ENCODE measurements at regions of chr10 and their contacts with region 1.

Region 1: GRCh38 chr10:22436884-22437619 is 91.8 kb downstream of the SPAG6 start:
- DNase-seq: peak; percentile 88
- ATAC-seq: peak; percentile 88
- H3K4me3 Mint-ChIP-seq: peak overlapping the region; percentile 94
- H3K27ac Mint-ChIP-seq: peak overlapping the region; percentile 96
- H3K4me1 Mint-ChIP-seq: peaks cover 36% of the 10 kb centered on the region
- H3K27me3 Mint-ChIP-seq: no peaks in the 10 kb centered on the region
- CTCF ChIP-seq: no peak

Region 2: GRCh38 chr10:22097696-22098095 is 339.4 kb before region 1 on chr10:
- CTCF ChIA-PET with region 1: no interaction called
- POLR2A ChIA-PET with region 1: no interaction called
- intact Hi-C with region 1: no loop called
- DNase-seq: no peak
- ATAC-seq: no peak
- H3K4me3 Mint-ChIP-seq: no peak overlapping the region
- H3K27ac Mint-ChIP-seq: no peak overlapping the region
- H3K4me1 Mint-ChIP-seq: no peaks in the 10 kb centered on the region
- H3K27me3 Mint-ChIP-seq: peaks cover 2% of the 10 kb centered on the region
- CTCF ChIP-seq: no peak

Region 3: GRCh38 chr10:22228943-22229801 is 207.9 kb before region 1 on chr10:
- CTCF ChIA-PET with region 1: interaction called, 3 read pairs
- POLR2A ChIA-PET with region 1: interaction called, 41 read pairs
- intact Hi-C with region 1: loop called (anchors 1 kb)
- DNase-seq: peak; percentile 81
- ATAC-seq: peak; percentile 79
- H3K4me3 Mint-ChIP-seq: peak overlapping the region; percentile 88
- H3K27ac Mint-ChIP-seq: peak overlapping the region; percentile 96
- H3K4me1 Mint-ChIP-seq: peaks cover 15% of the 10 kb centered on the region
- H3K27me3 Mint-ChIP-seq: peaks cover 7% of the 10 kb centered on the region
- CTCF ChIP-seq: no peak

Region 4: DNA sequence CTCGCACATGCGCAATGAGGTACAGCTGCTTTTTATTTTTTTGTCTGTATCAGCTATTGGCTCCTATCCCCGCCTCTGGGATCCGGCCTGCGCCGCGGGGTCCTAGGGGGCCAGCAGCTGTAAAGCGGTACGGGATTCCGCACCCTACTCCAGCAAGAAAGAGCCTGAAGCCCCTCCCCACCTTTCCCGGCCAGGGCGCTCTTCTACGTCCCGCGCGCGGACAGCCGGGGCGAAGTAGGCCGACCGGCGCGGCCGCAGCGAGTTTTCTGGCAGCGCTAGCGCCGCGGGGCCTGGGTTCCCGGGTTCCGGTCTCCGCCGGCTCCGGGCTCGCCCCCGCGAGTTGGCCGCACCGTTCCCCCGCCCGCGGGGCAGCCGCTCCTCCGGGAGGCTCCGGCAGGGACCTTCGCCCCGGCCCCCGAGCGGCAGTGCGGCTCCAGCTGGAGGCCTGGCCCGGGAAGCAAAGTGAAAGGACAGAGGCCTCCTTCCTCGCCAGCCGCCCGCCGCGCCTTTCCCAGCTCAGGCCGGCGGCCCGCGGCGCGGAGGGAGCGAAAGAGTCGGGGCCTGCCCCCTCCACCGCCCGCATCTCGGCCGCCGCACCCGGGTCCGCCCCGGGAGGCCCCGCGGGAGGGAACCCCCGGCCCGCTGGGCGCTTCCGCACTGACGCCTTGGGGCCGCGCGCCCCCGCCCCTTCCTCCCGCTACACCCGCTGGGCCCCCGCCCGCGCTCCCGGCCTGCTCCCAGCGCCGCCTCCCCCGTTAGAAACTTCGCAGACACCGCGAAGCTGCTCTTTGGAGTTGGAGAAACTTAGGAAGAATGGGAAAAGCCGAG is 96.5 kb before region 1 on chr10:
- CTCF ChIA-PET with region 1: interaction called, 4 read pairs
- POLR2A ChIA-PET with region 1: no interaction called
- intact Hi-C with region 1: loop called (anchors 1 kb)
- DNase-seq: peak; percentile 77
- ATAC-seq: peak; percentile 61
- H3K4me3 Mint-ChIP-seq: peak overlapping the region; percentile 90
- H3K27ac Mint-ChIP-seq: peak overlapping the region; percentile 88
- H3K4me1 Mint-ChIP-seq: peaks cover 34% of the 10 kb centered on the region
- H3K27me3 Mint-ChIP-seq: peaks cover 45% of the 10 kb centered on the region
- CTCF ChIP-seq: no peak

Region 5: DNA sequence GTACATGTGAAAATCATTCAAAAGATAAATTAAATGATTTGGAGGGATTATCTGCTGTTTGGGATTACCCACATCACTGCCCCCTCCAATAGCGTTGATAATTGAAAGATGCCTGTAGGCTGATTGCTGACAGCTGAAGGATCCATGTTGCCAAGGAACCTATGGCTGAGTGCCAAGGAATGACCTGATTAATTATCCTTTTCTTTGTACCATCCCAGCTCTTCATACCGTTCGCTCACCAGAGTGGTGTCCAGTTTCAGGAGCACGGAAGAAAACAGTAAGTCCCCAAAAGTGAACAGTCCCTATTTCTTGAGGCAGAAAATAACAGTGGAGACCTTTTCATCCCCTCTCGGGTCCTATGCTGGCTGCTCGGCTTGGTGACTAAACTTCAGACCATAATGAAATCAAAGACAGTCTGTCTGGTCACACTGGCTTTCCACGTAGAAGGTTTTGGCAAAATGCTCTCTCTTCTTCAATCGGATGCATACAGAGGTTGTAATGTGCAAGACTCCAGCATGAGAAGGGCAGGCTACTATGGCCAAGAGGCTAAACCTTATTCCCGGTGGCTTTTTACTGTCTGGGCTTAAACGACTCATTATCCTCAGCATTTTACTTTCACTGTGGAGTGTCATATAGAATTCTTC is 17.0 kb after region 1 on chr10:
- CTCF ChIA-PET with region 1: interaction called, 4 read pairs
- POLR2A ChIA-PET with region 1: interaction called, 86 read pairs
- intact Hi-C with region 1: loop called (anchors 1 kb)
- DNase-seq: no peak
- ATAC-seq: no peak
- H3K4me3 Mint-ChIP-seq: no peak overlapping the region
- H3K27ac Mint-ChIP-seq: peak overlapping the region; percentile 30
- H3K4me1 Mint-ChIP-seq: peaks cover 29% of the 10 kb centered on the region
- H3K27me3 Mint-ChIP-seq: no peaks in the 10 kb centered on the region
- CTCF ChIP-seq: no peak

Region 6: GRCh38 chr10:22742678-22743077 is 305.6 kb after region 1 on chr10:
- CTCF ChIA-PET with region 1: no interaction called
- POLR2A ChIA-PET with region 1: interaction called, 24 read pairs
- intact Hi-C with region 1: no loop called
- DNase-seq: no peak
- ATAC-seq: peak; percentile 100
- H3K4me3 Mint-ChIP-seq: peak overlapping the region; percentile 8
- H3K27ac Mint-ChIP-seq: peak overlapping the region; percentile 54
- H3K4me1 Mint-ChIP-seq: peaks cover 23% of the 10 kb centered on the region
- H3K27me3 Mint-ChIP-seq: no peaks in the 10 kb centered on the region
- CTCF ChIP-seq: no peak

Region 7: GRCh38 chr10:22891797-22892196 is 454.7 kb after region 1 on chr10:
- CTCF ChIA-PET with region 1: no interaction called
- POLR2A ChIA-PET with region 1: no interaction called
- intact Hi-C with region 1: no loop called
- DNase-seq: no peak
- ATAC-seq: no peak
- H3K4me3 Mint-ChIP-seq: no peak overlapping the region
- H3K27ac Mint-ChIP-seq: no peak overlapping the region
- H3K4me1 Mint-ChIP-seq: no peaks in the 10 kb centered on the region
- H3K27me3 Mint-ChIP-seq: no peaks in the 10 kb centered on the region
- CTCF ChIP-seq: no peak

Measured in activated B cell treated with CpG ODN at 0.5 μM for 24 hours (primary cell).